CD4-positive, alpha-beta T cell (primary cell): ENCODE measurements at regions of chr16 and their contacts with region 1.

Region 1: DNA sequence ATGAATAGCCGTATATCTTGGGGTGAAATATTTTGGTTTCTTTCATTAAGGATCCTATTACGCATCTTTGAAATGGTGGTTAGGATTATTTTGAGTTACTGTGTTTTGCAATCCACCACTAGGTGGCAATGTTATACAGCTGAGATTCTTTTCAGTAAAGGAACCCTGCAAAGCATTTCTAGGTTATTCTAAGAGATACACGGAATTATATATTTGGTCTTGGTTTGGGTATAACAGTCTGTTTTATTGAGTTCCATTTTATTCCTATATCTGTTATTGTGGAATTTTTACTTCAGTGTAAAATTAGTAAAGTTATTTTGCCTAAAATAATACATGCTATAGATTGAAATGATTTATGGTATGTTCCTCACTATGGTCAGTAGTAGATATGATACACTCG is 62.9 kb upstream of the CPHXL start:
- DNase-seq: peak in 4 of 14 experiments; percentile 10 to 66 (median 51)
- ATAC-seq: no peak
- H3K4me3 ChIP-seq: no peak overlapping the region
- H3K4me3 Mint-ChIP-seq: no peak overlapping the region
- H3K27ac ChIP-seq: no peak overlapping the region
- H3K27ac Mint-ChIP-seq: no peak overlapping the region
- H3K4me1 ChIP-seq: no peaks in the 10 kb centered on the region
- H3K4me1 Mint-ChIP-seq: no peaks in the 10 kb centered on the region
- H3K27me3 ChIP-seq: peaks cover 6 to 12% of the 10 kb centered on the region in 2 experiments
- H3K27me3 Mint-ChIP-seq: peaks cover 44% of the 10 kb centered on the region
- CTCF ChIP-seq: peak; percentile 93

Region 2: DNA sequence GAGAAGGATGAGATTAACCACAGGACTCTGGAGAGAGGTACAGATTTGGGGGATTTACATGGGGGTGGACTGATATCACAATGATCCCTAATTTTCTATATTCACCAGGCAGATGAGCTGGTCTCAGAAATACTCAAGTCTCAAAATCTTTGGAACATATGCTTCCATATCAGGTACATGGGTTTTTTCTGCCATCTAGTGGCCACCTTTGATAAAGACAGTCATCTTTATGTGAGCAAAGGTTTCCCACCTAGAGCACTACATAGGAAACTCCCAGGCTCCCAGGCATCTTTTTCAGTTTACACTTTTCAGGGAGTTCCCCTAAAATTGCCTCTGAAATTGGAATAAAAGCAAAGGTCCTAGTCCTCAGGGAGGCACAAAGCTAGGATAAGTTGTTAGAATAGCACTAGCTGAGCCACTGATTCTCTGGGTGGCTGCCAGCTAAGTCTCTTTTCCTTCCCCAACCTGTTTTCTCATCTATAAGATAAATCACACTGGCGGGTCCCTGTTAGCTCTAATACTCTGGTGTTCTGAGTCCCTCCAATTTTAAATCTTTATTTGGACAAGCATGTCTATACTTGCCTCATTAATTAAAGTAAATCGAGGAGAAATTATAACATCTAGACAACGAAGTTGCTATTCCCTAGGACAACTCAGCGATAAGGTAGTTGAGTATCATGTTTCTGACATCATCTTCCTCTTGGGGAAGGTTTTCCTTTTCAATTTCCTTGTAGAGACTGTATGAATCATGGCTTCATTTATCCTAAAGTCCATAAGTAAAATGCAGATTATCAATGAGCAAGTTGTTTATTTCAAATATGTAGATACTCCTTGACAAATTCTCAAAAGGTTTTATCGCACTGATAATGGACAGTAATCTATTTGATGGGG is 1382.8 kb after region 1 on chr16:
- CTCF ChIA-PET with region 1: interaction called, 4 read pairs
- POLR2A ChIA-PET with region 1: no interaction called
- intact Hi-C with region 1: loop called (anchors 1 kb)
- DNase-seq: peak in 4 of 14 experiments; percentile 33 to 71 (median 62)
- ATAC-seq: peak; percentile 57
- H3K4me3 ChIP-seq: no peak overlapping the region
- H3K4me3 Mint-ChIP-seq: no peak overlapping the region
- H3K27ac ChIP-seq: no peak overlapping the region
- H3K27ac Mint-ChIP-seq: no peak overlapping the region
- H3K4me1 ChIP-seq: no peaks in the 10 kb centered on the region
- H3K4me1 Mint-ChIP-seq: no peaks in the 10 kb centered on the region
- H3K27me3 ChIP-seq: peaks cover 5 to 39% of the 10 kb centered on the region in 2 experiments
- H3K27me3 Mint-ChIP-seq: peaks cover 77% of the 10 kb centered on the region
- CTCF ChIP-seq: peak; percentile 93